ENCODE measurements at regions of chr2 and their contacts with region 1.

Region 1: DNA sequence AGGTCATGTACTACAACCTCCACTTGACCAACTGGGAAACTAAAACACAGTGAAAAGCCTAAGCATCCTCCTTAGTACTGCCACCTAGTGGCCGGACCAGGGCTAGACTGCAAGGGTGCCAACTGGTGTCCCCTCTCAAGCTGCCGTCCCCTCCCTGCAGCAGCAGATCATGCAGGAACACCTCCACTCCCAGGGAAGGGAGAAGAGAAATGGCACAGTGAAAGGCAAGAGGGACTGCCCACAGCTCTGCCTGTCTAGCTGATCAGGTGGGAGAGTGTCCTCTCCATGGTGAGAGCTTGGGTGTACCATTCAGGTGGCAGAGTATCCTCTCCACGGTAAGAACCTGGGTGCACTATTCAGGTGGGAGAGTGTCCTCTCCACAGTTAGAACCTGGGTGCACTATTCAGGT is 78.1 kb downstream of the AAK1 start:
- DNase-seq: peak; percentile 43
- ATAC-seq: peak; percentile 52
- H3K4me3 Mint-ChIP-seq: no peak overlapping the region
- H3K27ac Mint-ChIP-seq: no peak overlapping the region
- H3K4me1 Mint-ChIP-seq: no peaks in the 10 kb centered on the region
- H3K27me3 Mint-ChIP-seq: peaks cover 20% of the 10 kb centered on the region
- CTCF ChIP-seq: peak; percentile 25

Region 2: DNA sequence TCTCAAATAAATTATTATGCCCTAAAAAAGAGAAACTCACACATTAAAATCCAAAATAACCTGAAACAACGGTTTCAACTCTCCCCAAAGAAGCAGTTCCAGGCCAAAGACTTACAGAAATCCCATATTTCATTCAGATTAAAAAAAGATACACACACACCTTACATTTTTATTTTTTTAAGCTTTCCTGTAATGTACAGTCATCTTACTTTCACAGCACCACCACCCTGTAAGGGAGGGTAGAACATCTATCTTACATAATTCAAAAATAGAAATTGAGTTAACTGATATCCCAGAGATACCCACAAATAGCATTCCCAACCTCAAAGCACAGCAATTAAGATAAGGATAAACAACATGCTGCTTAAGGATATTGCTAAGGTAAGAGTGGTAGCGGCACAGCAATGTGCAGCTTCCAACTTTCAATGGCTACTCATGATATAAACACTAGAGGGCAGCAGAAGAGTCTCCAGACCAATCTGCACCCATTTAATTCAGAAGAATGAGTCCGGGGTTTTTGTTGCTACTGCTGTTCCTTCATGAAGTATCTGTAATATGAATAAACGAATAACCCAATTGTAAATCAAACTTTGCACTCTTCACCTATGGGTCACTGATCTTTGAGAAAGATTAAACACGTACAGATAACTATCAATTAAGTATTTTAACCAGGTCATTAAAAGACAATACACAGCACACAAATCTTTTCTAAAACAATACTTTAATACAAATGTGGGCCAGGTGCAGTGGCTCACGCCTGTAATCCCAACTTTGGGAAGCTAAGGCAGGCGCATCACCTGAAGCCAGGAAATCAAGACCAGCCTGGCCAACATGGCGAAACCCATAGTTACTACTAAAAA is 189.7 kb before region 1 on chr2:
- CTCF ChIA-PET with region 1: interaction called, 14 read pairs
- POLR2A ChIA-PET with region 1: no interaction called
- intact Hi-C with region 1: no loop called
- DNase-seq: no peak
- ATAC-seq: no peak
- H3K4me3 Mint-ChIP-seq: no peak overlapping the region
- H3K27ac Mint-ChIP-seq: no peak overlapping the region
- H3K4me1 Mint-ChIP-seq: peaks cover 8% of the 10 kb centered on the region
- H3K27me3 Mint-ChIP-seq: no peaks in the 10 kb centered on the region
- CTCF ChIP-seq: no peak

Region 3: DNA sequence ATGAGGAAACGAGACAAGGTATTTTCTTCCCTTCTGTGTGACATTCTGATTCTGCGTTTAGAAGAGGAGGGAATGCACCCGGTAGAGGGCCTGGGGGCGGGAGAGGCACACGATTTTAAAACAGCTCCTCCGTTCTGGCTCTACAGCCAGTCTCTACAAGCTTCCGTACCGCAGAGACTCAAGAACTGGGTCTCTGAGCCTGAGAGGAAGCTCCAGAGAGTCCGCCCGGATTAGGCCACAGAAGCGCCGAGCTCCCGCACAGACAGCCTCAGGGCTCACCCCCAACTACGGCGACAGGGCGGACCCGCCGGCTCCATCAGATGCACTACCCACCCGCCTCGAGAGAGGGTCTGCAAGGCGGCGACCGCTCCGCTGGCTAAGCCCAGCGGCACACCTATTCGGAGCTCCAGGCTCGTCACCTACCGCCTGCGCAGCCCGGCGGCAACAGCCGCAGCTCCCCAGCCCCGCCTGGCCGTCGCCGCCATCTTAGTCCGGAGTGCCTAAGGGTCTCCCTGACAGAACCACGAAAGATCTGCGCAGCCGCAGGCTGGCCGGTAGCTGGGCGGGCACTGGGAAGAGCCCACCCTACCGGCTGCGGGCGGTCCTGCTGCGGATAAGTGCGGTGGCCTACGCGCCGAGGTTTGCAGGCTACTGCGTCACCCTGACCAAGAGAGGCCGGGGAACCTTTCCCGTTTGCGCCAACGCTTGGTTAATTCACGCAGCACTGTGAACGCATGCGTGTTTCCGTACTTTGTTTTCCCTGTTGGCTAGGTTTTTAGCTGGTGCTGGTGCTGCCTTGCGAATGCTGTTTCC is 128.3 kb before region 1 on chr2 and contains the start of gene NFU1:
- CTCF ChIA-PET with region 1: interaction called, 18 read pairs
- POLR2A ChIA-PET with region 1: no interaction called
- intact Hi-C with region 1: loop called (anchors 1 kb)
- DNase-seq: peak; percentile 85
- ATAC-seq: peak; percentile 95
- H3K4me3 Mint-ChIP-seq: peak within 1 kb of the TSS; percentile 96
- H3K27ac Mint-ChIP-seq: peak within 1 kb of the TSS; percentile 93
- H3K4me1 Mint-ChIP-seq: peaks cover 34% of the 10 kb centered on the region
- H3K27me3 Mint-ChIP-seq: no peaks in the 10 kb centered on the region
- CTCF ChIP-seq: no peak
- total RNA-seq, gene NFU1: 24.3 and 31.1 TPM in 2 replicates

Region 4: DNA sequence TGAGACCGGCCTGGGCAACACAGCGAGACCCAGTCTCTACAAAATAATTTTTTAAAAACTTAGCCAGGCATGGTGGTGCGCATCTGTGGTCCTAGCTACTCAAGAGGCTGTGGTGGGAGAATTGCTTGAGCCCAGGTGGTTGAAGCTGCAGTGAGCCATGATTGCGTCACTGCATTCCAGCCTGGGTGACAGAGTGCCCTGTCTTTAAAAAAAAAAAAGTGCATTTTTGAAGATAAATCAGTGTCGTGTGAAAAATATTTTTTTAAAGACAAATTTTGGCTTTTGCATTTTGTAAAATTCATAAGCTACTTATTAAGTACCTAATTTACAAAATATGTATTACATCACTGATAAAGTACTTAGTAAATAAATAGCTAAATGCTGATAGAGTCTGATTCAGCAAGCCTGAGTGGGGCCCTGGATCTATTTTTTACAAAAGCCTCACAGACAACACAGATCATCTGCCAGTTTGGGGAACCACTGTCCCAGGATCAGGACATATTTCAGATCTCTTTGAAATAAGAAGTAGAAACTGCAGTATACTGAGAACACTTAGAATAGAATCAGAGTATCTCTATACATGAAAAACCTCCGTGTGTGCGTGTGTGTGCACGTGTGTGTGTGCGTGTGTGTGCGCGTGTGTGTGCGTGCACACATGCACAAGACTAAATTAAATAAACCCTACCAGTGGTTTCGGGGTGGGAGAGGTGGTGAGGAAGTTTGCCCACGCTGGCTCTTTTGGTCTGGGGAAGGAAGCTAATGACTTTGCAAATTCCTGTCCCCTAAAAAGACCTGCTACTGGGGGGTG is 16.5 kb after region 1 on chr2:
- CTCF ChIA-PET with region 1: interaction called, 13 read pairs
- POLR2A ChIA-PET with region 1: no interaction called
- intact Hi-C with region 1: no loop called
- DNase-seq: no peak
- ATAC-seq: no peak
- H3K4me3 Mint-ChIP-seq: no peak overlapping the region
- H3K27ac Mint-ChIP-seq: no peak overlapping the region
- H3K4me1 Mint-ChIP-seq: peaks cover 10% of the 10 kb centered on the region
- H3K27me3 Mint-ChIP-seq: peaks cover 12% of the 10 kb centered on the region
- CTCF ChIP-seq: no peak